ENCODE measurements at regions of chr17 and their contacts with region 1.

Region 1: GRCh38 chr17:12667299-12667958 is 1.7 kb downstream of the MYOCD start:
- DNase-seq: peak; percentile 76
- H3K4me3 ChIP-seq: peak overlapping the region; percentile 68 to 87 (median 74)
- H3K27ac ChIP-seq: peak overlapping the region; percentile 88 to 97 (median 92)
- H3K4me1 ChIP-seq: peaks cover 0 to 62% (median 33%) of the 10 kb centered on the region in 4 donors
- H3K27me3 ChIP-seq: peaks cover 0 to 4% (median 0%) of the 10 kb centered on the region in 3 donors
- CTCF ChIP-seq: peak; percentile 53 to 76 (median 56)
- EP300 ChIP-seq: no peak
- POLR2A ChIP-seq: no peak

Region 2: DNA sequence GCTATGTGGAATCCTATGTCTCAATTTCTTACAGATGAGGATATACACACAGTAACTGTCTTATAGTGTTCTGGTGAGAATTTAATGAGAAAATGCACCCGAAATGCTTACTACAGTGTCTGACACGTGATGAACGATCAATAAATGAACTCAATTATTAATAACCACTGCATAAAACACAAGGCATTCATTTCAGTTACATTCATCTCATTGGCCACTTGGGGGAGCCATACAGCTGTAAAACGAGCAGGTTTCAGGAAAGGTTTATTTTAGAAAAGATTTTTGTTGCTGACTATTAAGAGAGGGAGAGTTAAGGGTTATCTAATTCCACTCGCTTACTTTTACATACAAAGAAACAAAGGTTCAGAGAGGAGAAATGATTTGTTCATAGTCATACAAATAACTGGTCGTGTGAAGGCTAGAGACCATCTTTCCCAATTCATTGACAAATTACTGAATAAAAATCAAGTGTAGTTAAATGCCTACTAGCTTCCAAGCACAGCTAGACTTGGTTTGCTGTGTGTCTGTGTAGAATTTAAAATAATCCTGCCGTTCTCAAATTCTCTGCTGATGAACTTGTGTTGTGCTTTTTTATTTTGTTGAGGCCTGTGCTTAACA is 486.7 kb before region 1 on chr17:
- intact Hi-C with region 1: loop called (anchors 1 kb)
- DNase-seq: no peak
- H3K4me3 ChIP-seq: no peak overlapping the region
- H3K27ac ChIP-seq: peak overlapping the region; percentile 58 to 73 (median 64)
- H3K4me1 ChIP-seq: peaks cover 4 to 14% (median 8%) of the 10 kb centered on the region in 4 donors
- H3K27me3 ChIP-seq: no peaks in the 10 kb centered on the region
- CTCF ChIP-seq: peak; percentile 62 to 73 (median 70)
- EP300 ChIP-seq: no peak
- POLR2A ChIP-seq: no peak

Region 3: GRCh38 chr17:12256380-12256995 is 410.9 kb before region 1 on chr17:
- intact Hi-C with region 1: loop called (anchors 1 kb)
- DNase-seq: peak; percentile 74
- H3K4me3 ChIP-seq: no peak overlapping the region
- H3K27ac ChIP-seq: peak overlapping the region; percentile 46 to 55 (median 49)
- H3K4me1 ChIP-seq: peaks cover 0 to 47% (median 35%) of the 10 kb centered on the region in 4 donors
- H3K27me3 ChIP-seq: no peaks in the 10 kb centered on the region
- CTCF ChIP-seq: peak; percentile 59 to 73 (median 64)
- EP300 ChIP-seq: no peak
- POLR2A ChIP-seq: no peak

Region 4: DNA sequence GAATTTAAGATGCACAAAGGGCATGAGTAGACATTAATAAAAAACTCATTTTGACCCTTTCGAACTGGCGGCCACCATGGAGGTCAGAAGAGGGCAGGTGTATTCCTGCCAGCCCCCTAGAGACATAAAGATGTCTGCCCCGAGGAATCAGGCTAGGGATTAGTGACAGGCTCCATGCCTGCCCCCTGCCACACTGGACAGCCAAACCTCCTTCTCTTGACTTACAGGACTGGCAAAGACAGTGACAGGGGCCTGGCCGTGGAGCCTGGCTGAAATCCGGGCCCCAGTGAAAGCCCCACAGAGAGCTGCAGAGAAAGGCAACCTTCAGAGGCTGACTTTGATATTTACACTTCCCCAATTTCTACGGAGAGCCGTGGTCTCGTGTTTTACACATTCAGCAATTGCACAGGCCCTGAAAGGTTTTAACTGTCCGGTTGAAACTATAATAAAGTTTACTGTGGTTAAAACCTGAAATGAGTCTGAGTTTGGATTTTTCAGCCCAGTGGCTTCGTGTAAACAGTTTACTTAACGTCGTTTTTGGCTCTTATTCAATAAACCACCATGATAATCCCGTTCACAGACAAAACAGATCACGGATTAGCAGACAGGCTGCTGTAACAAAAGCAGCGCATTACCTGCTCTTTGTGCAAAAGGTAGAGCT is 245.7 kb before region 1 on chr17:
- intact Hi-C with region 1: loop called (anchors 2 kb)
- DNase-seq: no peak
- H3K4me3 ChIP-seq: peak overlapping the region in 1 of 4 donors; percentile 0
- H3K27ac ChIP-seq: peak overlapping the region; percentile 74 to 86 (median 84)
- H3K4me1 ChIP-seq: peaks cover 0 to 67% (median 45%) of the 10 kb centered on the region in 4 donors
- H3K27me3 ChIP-seq: no peaks in the 10 kb centered on the region
- CTCF ChIP-seq: no peak
- EP300 ChIP-seq: no peak
- POLR2A ChIP-seq: no peak

Region 5: DNA sequence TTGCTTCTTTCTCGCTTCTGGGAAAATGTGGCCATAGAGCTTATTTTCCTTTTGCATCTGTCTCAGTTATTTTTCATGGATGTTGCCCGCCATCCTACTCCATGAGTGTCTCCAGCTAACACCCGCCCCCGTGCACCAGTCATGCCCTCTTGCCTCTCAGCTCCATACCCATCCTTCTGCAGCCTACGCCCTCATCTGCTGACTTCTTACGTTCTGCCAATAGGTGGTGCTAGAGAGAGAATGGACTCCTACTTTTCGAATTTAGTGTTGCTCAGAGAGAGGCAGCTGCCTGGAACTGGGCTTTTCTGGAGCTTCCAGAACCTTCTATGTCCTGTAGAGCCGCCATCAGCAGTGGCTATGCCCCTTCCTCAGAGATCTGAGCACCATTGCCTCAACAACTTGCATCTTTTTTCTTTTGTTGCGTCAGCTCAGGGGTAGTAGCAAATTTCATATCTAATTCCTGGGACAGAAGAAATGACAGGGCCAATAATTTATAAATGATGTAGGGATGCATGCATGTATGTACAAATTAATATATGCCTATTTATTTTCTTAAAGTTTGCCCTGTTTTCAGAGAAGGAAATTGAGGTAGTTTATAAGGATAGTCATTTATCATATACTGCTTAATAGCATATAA is 121.4 kb before region 1 on chr17:
- intact Hi-C with region 1: loop called (anchors 2 kb)
- DNase-seq: no peak
- H3K4me3 ChIP-seq: no peak overlapping the region
- H3K27ac ChIP-seq: no peak overlapping the region
- H3K4me1 ChIP-seq: peaks cover 0 to 39% (median 31%) of the 10 kb centered on the region in 4 donors
- H3K27me3 ChIP-seq: no peaks in the 10 kb centered on the region
- CTCF ChIP-seq: peak; percentile 12 to 63 (median 60)
- EP300 ChIP-seq: no peak
- POLR2A ChIP-seq: no peak

Measured in sigmoid colon (tissue), 7 donors.